Right cardiac atrium (tissue), 5 donors: ENCODE measurements at regions of chr1 and their contacts with region 1.

Region 1: DNA sequence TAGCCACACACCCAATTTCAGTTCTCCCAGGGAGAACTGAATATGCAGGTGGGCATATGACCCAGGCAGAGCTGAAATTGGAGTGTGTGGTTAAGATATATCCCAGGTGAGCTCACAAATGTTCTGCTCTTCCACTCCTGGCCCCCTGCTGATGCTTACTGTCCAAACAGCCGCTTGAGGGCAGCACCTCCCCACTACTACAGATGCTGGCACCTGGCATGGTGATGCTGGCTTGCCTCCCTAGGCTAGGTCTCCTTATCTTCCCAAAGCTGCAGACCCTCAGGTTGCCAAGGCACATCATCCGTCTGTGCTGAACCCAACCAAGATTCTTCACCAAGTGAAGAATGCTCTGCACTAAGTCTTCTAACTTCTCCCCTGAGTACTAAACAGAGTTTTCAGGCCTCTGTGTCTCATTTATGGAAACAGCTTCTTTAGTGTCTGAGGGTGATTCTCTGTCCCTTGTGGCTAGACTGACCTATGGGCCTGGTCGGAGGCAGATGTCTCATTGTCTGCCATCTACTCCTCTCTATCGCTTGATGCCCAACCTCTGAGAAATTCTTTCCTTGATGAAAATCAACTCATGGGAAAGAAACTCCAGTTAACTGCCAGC is 27.2 kb downstream of the XCL1 start:
- DNase-seq: peak; percentile 80 to 91 (median 88)
- ATAC-seq: peak; percentile 90 to 94
- H3K4me3 ChIP-seq: no peak overlapping the region
- H3K27ac ChIP-seq: no peak overlapping the region
- H3K4me1 ChIP-seq: no peaks in the 10 kb centered on the region
- H3K27me3 ChIP-seq: no peaks in the 10 kb centered on the region

Region 2: DNA sequence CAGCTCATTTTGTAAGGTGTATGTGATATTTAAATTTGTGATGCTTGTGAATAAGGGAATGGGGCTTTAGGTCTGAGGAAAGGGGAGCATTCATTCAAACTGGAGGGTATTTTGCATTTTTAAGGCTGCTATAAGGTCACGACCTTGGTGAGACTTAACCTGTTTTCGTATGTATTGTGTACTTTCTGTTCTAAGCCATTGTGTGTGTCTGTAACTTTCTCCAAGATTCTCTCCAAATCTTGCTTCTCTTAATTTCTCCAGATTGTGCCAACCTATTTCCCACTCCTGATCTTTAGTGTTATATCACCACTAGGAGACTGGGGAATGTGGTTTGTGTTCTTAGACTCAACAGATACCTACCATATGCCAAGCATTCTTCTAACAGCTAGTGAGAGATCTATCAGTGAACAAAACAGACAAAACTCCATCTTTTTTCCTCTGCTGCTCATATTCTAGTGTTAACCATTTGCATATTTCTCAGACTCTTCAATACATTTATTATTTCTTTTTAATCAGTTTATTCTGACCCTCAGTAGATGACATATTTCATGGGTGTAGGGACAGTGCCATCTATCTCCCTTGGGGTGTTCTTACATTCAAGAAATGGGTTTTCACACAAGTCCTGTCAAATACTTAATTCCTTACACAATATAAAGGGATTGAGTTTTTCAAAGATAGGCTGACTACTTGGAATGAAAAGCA is 530.3 kb after region 1 on chr1:
- intact Hi-C with region 1: loop called in 1 of 4 experiments (anchors 10 kb)
- DNase-seq: no peak
- ATAC-seq: peak in 1 of 2 donors; percentile 30
- H3K4me3 ChIP-seq: no peak overlapping the region
- H3K27ac ChIP-seq: no peak overlapping the region
- H3K4me1 ChIP-seq: peaks cover 3% of the 10 kb centered on the region
- H3K27me3 ChIP-seq: no peaks in the 10 kb centered on the region